WTC11 (cell line): ENCODE measurements at regions of chr3 and their contacts with region 1.

Region 1: DNA sequence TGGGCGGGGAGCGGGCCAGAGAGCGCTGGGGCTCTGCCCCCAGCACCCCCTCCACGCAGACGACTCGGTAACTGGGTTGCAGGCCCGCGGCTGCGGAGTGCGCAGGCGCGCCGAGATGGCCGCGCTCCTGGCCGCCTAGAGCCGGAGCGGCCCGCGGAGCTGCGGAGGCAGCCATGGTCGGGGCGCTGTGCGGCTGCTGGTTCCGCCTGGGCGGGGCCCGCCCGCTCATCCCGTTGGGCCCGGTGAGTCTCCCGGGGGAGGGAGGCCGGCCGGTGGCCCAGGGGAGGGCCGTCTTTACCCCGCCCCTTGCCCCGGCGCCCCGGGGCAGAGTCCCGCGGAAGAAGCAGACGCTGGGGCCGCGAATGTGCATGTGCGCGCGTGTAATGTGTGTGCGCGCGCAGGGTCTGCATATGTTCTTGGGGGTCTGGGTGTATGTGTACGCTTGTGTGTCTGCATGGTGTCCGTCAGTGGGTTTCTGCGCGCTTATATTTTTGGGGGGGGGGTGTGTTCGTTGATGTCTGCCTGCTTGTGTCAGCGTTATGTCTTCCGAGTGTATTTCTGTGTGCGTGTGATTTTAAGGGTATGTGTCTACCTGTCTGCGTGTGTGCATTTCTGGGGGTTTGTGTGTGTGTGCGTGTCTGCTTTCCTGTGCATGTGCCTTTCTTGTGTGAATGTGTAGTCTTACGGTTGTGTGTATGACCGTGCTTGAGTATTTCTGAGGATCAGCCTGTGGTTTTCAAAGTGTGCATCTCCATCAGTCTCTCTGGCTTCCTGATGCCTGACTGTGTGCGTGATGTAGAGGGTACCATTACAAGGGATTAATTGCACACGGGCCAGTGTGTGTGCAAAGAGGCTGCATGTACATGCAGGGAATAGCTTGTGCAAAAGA is at the start of gene ABHD14A:
- DNase-seq: peak; percentile 69
- ATAC-seq: peak; percentile 70
- H3K4me3 Mint-ChIP-seq: peak within 1 kb of the TSS; percentile 79
- H3K27ac Mint-ChIP-seq: no peak within 1 kb of the TSS
- H3K4me1 Mint-ChIP-seq: peaks cover 22% of the 10 kb centered on the region
- H3K27me3 Mint-ChIP-seq: peaks cover 43% of the 10 kb centered on the region
- CTCF ChIP-seq: no peak
- total RNA-seq, gene ABHD14A: 3.8 to 5.9 TPM (median 4.5 TPM) in 3 replicates

Region 2: DNA sequence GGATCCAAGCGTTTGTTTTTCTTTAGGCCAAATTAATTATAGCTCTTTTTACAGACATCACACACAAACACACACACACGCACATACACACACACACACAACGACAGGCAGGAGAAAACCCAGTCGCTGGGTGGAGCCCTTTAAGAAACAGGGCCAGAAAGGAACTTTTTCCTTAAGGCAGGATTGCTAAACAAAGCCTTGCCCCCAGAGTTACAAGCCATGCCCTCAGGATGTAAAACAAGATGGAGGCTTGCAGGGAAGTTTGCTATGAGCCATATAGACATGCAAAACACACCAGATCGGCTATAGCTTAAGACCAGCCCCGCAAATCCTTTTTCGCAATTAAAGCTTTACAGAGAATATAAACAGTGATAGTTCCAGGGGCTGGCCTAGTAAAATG is 130.1 kb before region 1 on chr3:
- CTCF ChIA-PET with region 1: no interaction called
- POLR2A ChIA-PET with region 1: no interaction called
- DNase-seq: peak; percentile 23
- ATAC-seq: peak; percentile 90
- H3K4me3 Mint-ChIP-seq: no peak overlapping the region
- H3K27ac Mint-ChIP-seq: peak overlapping the region; percentile 64
- H3K4me1 Mint-ChIP-seq: peaks cover 15% of the 10 kb centered on the region
- H3K27me3 Mint-ChIP-seq: no peaks in the 10 kb centered on the region
- CTCF ChIP-seq: no peak

Region 3: GRCh38 chr3:51941798-51942602 is 33.2 kb before region 1 on chr3 and contains the starts of genes PARP3 and RRP9:
- CTCF ChIA-PET with region 1: interaction called, 49 read pairs
- POLR2A ChIA-PET with region 1: interaction called, 19 read pairs
- DNase-seq: peak; percentile 100
- ATAC-seq: peak; percentile 96
- H3K4me3 Mint-ChIP-seq: peak within 1 kb of the TSS; percentile 91
- H3K27ac Mint-ChIP-seq: no peak within 1 kb of the TSS
- H3K4me1 Mint-ChIP-seq: peaks cover 17% of the 10 kb centered on the region
- H3K27me3 Mint-ChIP-seq: no peaks in the 10 kb centered on the region; the same call in 1 of the 2 replicates
- CTCF ChIP-seq: peak; percentile 99
- total RNA-seq, gene PARP3: 2.8 to 2.9 TPM (median 2.8 TPM) in 3 replicates
- total RNA-seq, gene RRP9: 47.0 to 49.9 TPM (median 49.4 TPM) in 3 replicates

Region 4: GRCh38 chr3:51955893-51956770 is 19.1 kb before region 1 on chr3:
- CTCF ChIA-PET with region 1: interaction called, 60 read pairs
- POLR2A ChIA-PET with region 1: no interaction called
- DNase-seq: peak; percentile 86
- ATAC-seq: peak; percentile 82
- H3K4me3 Mint-ChIP-seq: peak overlapping the region; percentile 54
- H3K27ac Mint-ChIP-seq: no peak overlapping the region
- H3K4me1 Mint-ChIP-seq: peaks cover 4% of the 10 kb centered on the region; the same call in 1 of the 2 replicates
- H3K27me3 Mint-ChIP-seq: peaks cover 49% of the 10 kb centered on the region
- CTCF ChIP-seq: peak; percentile 67

Region 5: DNA sequence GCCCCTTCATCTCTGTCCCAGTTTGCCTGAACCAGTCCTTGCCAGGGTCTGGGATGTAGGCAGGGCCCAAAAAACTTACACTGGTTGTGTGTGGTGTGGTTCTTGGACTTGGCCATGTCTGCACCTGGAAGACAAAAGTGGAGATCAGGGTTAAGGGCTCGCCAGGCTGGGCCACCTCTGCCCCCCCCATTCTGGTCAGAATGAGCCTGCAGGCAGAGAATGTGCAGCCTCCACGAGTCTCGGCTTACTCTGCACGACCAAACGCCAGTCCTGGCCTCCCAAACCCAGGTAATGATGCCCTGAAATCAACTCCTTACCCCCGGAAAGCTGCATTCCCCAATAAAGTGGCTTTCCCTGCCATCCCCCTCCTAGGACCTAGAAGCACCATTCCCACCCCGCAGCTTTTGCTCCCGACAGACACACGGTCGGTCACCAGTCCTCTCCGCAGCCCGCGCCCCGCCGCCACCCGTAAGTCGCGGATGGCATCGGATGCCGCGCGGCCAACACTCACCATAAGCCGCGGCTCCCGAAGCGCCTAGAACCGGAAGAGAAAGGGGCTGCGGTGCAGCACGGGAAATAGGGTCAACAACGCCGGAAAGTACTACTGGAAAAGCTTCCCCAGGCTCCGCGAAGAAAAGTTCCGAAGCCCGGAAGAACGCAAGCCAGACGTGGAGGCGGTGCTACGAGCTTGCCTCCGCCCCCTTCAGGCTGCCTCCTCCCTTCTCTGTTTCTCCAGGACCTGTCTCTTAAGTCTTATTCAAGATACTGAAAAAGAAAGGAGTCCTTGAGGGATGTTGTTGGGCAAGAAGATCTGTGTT is 20.3 kb after region 1 on chr3 and contains the start of gene RPL29:
- CTCF ChIA-PET with region 1: interaction called, 21 read pairs
- POLR2A ChIA-PET with region 1: interaction called, 8 read pairs
- DNase-seq: peak; percentile 92
- ATAC-seq: peak; percentile 85
- H3K4me3 Mint-ChIP-seq: peak within 1 kb of the TSS; percentile 99
- H3K27ac Mint-ChIP-seq: peak within 1 kb of the TSS; percentile 100
- H3K4me1 Mint-ChIP-seq: peaks cover 33% of the 10 kb centered on the region
- H3K27me3 Mint-ChIP-seq: no peaks in the 10 kb centered on the region
- CTCF ChIP-seq: no peak
- total RNA-seq, gene RPL29: 1,343 to 1,592 TPM (median 1,542 TPM) in 3 replicates

Region 6: GRCh38 chr3:52023860-52024764 is 48.9 kb after region 1 on chr3:
- CTCF ChIA-PET with region 1: no interaction called
- POLR2A ChIA-PET with region 1: no interaction called
- DNase-seq: no peak
- ATAC-seq: no peak
- H3K4me3 Mint-ChIP-seq: no peak overlapping the region
- H3K27ac Mint-ChIP-seq: no peak overlapping the region; the same call in 1 of the 2 replicates
- H3K4me1 Mint-ChIP-seq: peaks cover 9% of the 10 kb centered on the region
- H3K27me3 Mint-ChIP-seq: no peaks in the 10 kb centered on the region
- CTCF ChIP-seq: no peak